A673 (cell line): ENCODE measurements at regions of chr12 and their contacts with region 1.

Region 1: GRCh38 chr12:17372508-17372907 is 717.5 kb downstream of the RERGL start:
- DNase-seq: peak; percentile 94
- H3K4me3 ChIP-seq: no peak overlapping the region
- H3K27ac ChIP-seq: peak overlapping the region; percentile 97
- H3K4me1 ChIP-seq: peaks cover 44% of the 10 kb centered on the region
- H3K27me3 ChIP-seq: no peaks in the 10 kb centered on the region
- CTCF ChIP-seq: no peak

Region 2: DNA sequence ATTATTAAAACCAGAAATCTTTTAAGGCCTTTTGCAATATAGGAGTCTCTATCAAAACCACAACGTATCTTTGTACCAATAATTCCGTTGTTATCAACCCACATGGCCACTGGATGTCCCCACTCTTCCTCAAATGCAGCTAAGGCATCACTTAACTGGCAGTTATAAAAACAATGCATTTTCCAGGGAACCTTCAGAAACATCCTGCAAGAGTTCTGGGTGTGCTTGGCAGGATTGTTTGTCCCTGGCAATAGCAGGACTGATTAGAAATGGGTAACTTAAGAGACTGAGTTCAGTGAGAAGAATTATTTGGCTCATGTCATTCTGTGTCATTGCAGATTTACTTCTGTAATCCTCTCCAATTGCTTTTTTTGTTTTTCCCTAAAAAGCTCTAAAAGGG is 1207.0 kb before region 1 on chr12:
- CTCF ChIA-PET with region 1: no interaction called
- POLR2A ChIA-PET with region 1: no interaction called
- intact Hi-C with region 1: loop called (anchors 10 kb)
- DNase-seq: peak; percentile 82
- H3K4me3 ChIP-seq: no peak overlapping the region
- H3K27ac ChIP-seq: no peak overlapping the region
- H3K4me1 ChIP-seq: peaks cover 20% of the 10 kb centered on the region
- H3K27me3 ChIP-seq: peaks cover 13% of the 10 kb centered on the region
- CTCF ChIP-seq: peak; percentile 77

Region 3: DNA sequence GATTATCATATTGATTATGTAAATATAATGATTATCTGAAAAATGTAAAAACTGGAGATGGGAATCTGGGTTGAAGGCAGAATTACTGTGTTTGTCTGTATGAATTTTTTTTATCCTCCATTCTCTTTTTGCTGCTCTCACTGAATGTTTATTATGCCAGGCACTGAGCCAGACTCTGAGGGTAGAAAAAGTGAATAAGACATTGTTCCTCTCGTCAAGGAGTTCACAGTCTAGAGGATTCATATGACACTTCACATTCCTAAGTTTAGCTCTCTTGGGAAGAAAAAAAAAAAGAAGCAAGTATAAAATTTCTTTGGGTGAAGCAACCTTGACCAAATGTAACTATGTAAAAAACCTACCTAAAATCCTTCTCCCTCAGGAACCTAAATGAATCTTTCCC is 645.6 kb before region 1 on chr12:
- CTCF ChIA-PET with region 1: interaction called, 7 read pairs
- POLR2A ChIA-PET with region 1: interaction called, 6 read pairs
- intact Hi-C with region 1: loop called (anchors 1 kb)
- DNase-seq: peak; percentile 92
- H3K4me3 ChIP-seq: no peak overlapping the region
- H3K27ac ChIP-seq: peak overlapping the region; percentile 97
- H3K4me1 ChIP-seq: peaks cover 26% of the 10 kb centered on the region
- H3K27me3 ChIP-seq: no peaks in the 10 kb centered on the region
- CTCF ChIP-seq: no peak

Region 4: DNA sequence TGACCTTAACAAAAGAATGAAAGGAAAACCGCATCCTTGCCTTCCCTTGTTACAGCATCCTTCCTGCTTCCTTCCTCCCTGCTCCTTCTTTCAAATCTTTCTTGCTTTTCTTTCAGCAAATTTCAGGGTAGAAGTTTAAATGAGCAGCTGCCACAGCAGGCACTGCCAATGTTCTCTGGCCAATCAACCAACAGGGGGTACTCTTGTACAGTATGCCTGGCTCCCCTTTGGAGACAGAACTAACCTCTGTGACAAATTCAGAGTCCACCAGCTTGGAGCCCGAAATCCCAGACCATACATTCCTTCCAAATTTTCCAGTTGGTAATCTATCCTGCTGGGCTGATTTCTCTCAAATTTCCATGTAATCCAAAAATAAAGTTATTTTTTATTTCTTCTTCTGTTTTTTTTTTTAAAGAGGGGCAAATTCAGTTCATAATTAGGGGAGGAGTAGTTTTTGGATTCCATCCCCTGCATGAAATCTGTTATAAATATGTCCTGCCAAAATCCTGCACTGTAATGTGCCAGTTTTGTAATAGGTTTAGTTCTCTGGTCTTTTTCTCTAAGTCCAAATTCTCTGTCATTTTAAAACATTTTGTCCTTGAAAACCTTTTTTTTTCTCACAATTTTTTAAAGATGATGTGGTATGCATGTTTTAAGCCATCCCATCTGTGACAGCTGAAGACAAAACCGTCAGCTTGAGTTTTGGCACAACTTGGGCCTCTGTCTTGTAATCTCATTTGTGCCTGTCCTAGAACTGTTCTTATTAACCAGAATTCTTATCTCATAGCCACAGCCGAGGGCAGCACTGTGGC is 156.5 kb before region 1 on chr12:
- CTCF ChIA-PET with region 1: no interaction called
- POLR2A ChIA-PET with region 1: no interaction called
- intact Hi-C with region 1: loop called (anchors 1 kb)
- DNase-seq: peak; percentile 85
- H3K4me3 ChIP-seq: peak overlapping the region; percentile 19
- H3K27ac ChIP-seq: peak overlapping the region; percentile 51
- H3K4me1 ChIP-seq: peaks cover 22% of the 10 kb centered on the region
- H3K27me3 ChIP-seq: no peaks in the 10 kb centered on the region
- CTCF ChIP-seq: peak; percentile 59

Region 5: GRCh38 chr12:17588968-17589367 is 216.5 kb after region 1 on chr12:
- CTCF ChIA-PET with region 1: interaction called, 3 read pairs
- POLR2A ChIA-PET with region 1: interaction called, 4 read pairs
- intact Hi-C with region 1: loop called (anchors 2 kb)
- DNase-seq: peak; percentile 90
- H3K4me3 ChIP-seq: peak overlapping the region; percentile 39
- H3K27ac ChIP-seq: peak overlapping the region; percentile 84
- H3K4me1 ChIP-seq: peaks cover 49% of the 10 kb centered on the region
- H3K27me3 ChIP-seq: no peaks in the 10 kb centered on the region
- CTCF ChIP-seq: peak; percentile 81

Region 6: GRCh38 chr12:17928708-17929366 is 556.3 kb after region 1 on chr12:
- CTCF ChIA-PET with region 1: no interaction called
- POLR2A ChIA-PET with region 1: no interaction called
- intact Hi-C with region 1: loop called (anchors 2 kb)
- DNase-seq: peak; percentile 84
- H3K4me3 ChIP-seq: no peak overlapping the region
- H3K27ac ChIP-seq: no peak overlapping the region
- H3K4me1 ChIP-seq: peaks cover 24% of the 10 kb centered on the region
- H3K27me3 ChIP-seq: no peaks in the 10 kb centered on the region
- CTCF ChIP-seq: peak; percentile 53